H1 (cell line): ENCODE measurements at regions of chr16 and their contacts with region 1.

Region 1: DNA sequence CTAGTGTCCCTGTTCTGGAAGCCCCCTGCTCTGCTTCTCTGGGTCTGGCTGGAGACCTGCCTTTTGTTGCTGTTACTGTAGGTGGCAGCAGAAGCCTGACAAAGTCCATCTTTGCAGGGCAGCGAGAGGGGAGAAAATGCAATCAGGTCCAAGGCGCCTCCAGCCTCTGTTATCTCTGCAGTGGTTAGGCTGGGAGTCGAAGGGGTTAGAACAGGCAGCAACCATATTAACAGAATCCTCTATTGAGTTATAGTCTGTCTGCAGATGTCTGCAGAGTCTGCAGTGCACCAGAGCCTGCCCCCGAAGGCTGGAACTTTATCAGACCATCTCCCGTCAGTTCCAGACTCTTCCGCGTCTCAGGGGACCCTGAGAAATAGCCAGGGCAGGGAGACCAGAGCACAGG is 404.9 kb upstream of the EEF2KMT start:
- DNase-seq: peak; percentile 39 to 73
- H3K4me3 ChIP-seq: no peak overlapping the region
- H3K27ac ChIP-seq: no peak overlapping the region
- H3K4me1 ChIP-seq: 0 out of 7 replicates have a peak, but pooled peaks cover 0 to 6% (median 0%) of the 10 kb centered on the region in 4 experiments
- H3K27me3 ChIP-seq: no peaks in the 10 kb centered on the region
- CTCF ChIP-seq: peak; percentile 71 to 93 (median 91)
- EP300 ChIP-seq: no peak
- POLR2A ChIP-seq: no peak
- RAD21 ChIP-seq: peak; percentile 96 to 98

Region 2: DNA sequence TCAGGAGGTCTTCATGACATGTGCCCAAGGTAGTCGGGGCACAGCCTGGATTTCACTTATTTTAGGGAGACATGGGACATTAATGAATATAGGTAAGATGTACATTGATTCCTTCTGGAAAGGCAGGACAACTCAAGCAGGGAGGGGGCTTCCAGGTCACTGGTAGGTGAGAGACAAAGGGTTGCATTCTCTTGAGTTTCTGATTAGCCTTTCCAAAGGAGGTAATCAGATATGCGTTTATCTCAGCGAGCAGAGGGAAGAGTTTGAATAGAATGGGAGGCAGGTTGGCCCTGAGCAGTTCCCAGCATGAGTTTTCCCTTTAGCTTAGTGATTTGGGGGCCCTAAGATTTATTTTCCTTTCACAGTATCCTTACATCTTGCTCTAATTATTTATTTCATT is 38.9 kb after region 1 on chr16:
- CTCF ChIA-PET with region 1: no interaction called
- POLR2A ChIA-PET with region 1: no interaction called
- DNase-seq: no peak
- H3K4me3 ChIP-seq: no peak overlapping the region
- H3K27ac ChIP-seq: no peak overlapping the region
- H3K4me1 ChIP-seq: no peaks in the 10 kb centered on the region; a peak in 3 of 7 replicates
- H3K27me3 ChIP-seq: no peaks in the 10 kb centered on the region
- CTCF ChIP-seq: no peak
- EP300 ChIP-seq: no peak
- POLR2A ChIP-seq: no peak
- RAD21 ChIP-seq: no peak

Region 3: DNA sequence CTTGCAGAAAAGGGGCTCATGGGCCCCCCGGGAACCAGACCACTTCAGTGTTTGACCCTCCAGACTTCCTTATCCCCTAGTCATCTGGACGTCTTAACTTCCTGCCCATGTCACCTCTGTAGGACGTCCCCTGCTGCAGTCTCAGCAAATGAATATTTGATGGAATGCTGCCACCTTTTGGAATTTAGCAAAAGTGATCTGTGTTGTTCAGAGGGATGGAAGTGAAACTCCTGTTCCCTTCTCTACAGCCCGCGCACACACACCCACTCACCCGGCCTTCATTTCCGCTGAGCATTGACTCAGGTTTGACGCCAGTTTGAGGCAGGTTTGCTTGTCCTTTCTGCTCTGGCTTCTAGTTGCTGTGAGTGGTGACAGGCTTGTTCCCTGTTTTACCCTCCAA is 102.3 kb after region 1 on chr16:
- CTCF ChIA-PET with region 1: interaction called, 27 read pairs
- POLR2A ChIA-PET with region 1: no interaction called
- DNase-seq: no peak
- H3K4me3 ChIP-seq: no peak overlapping the region
- H3K27ac ChIP-seq: no peak overlapping the region
- H3K4me1 ChIP-seq: peaks cover 0 to 6% (median 2%) of the 10 kb centered on the region in 4 experiments; a peak in 3 of 7 replicates
- H3K27me3 ChIP-seq: no peaks in the 10 kb centered on the region
- CTCF ChIP-seq: peak in 2 of 3 experiments; percentile 54 to 61; a peak in 3 of 4 replicates
- EP300 ChIP-seq: no peak
- POLR2A ChIP-seq: no peak
- RAD21 ChIP-seq: peak; percentile 82 to 84

Region 4: DNA sequence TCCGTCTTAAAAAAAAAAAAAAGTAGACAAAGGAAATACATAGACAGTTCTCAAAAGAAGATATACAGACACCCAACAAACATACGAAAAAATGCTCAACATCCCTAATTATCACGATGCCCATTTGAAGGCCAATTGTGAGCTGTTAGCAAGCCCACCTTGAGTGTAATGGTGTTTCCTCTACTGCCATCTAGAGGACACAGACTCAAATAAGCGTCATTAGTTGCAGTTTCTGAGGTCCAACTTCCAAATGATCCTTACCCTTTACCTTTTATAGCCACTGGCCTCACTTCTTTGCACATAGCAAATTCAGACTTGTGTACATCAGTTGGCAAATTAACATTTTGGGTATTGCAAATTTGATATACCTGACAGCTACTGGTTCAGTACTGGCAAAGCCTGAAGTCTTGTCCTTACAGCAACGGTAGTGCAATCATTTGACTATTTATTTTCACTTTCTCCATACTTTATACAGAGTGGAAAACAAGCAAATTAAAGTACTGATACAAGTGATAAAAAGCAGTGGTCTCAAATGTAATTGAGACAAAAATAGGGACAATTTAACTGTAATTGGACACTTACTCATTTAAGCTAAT is 131.5 kb after region 1 on chr16:
- CTCF ChIA-PET with region 1: interaction called, 14 read pairs
- POLR2A ChIA-PET with region 1: no interaction called
- DNase-seq: no peak
- H3K4me3 ChIP-seq: no peak overlapping the region
- H3K27ac ChIP-seq: no peak overlapping the region
- H3K4me1 ChIP-seq: no peaks in the 10 kb centered on the region
- H3K27me3 ChIP-seq: no peaks in the 10 kb centered on the region
- CTCF ChIP-seq: peak in 2 of 3 experiments; percentile 56 to 75; a peak in 3 of 4 replicates
- EP300 ChIP-seq: no peak
- POLR2A ChIP-seq: no peak
- RAD21 ChIP-seq: peak; percentile 59 to 68